ENCODE measurements at regions of chr17 and their contacts with region 1.

Region 1: GRCh38 chr17:7745748-7746470 is 28.4 kb downstream of the DNAH2 start:
- DNase-seq: peak in 1 of 6 donors; percentile 15
- ATAC-seq: no peak
- H3K4me3 ChIP-seq: no peak overlapping the region
- H3K27ac ChIP-seq: no peak overlapping the region
- H3K4me1 ChIP-seq: no peaks in the 10 kb centered on the region
- H3K27me3 ChIP-seq: no peaks in the 10 kb centered on the region
- CTCF ChIP-seq: no peak

Region 2: GRCh38 chr17:7650509-7651096 is 95.3 kb before region 1 on chr17 and contains the start of gene ATP1B2:
- intact Hi-C with region 1: no loop called
- DNase-seq: peak; percentile 57 to 86 (median 72)
- ATAC-seq: peak; percentile 78 to 92 (median 88)
- H3K4me3 ChIP-seq: peak within 1 kb of the TSS; percentile 18 to 50 (median 29)
- H3K27ac ChIP-seq: no peak within 1 kb of the TSS
- H3K4me1 ChIP-seq: peaks cover 4 to 10% (median 10%) of the 10 kb centered on the region in 3 donors
- H3K27me3 ChIP-seq: no peaks in the 10 kb centered on the region
- CTCF ChIP-seq: no peak
- total RNA-seq, gene ATP1B2: 0.79 to 1.9 (median 1.2) TPM

Region 3: GRCh38 chr17:7856883-7857723 is 111.2 kb after region 1 on chr17 and contains the start of gene NAA38:
- intact Hi-C with region 1: loop called in 2 of 3 experiments (anchors 5 to 10 kb)
- DNase-seq: peak; percentile 89 to 99 (median 96)
- ATAC-seq: peak; percentile 83 to 92 (median 86)
- H3K4me3 ChIP-seq: peak within 1 kb of the TSS; percentile 41 to 82 (median 59)
- H3K27ac ChIP-seq: peak within 1 kb of the TSS; percentile 75 to 80 (median 77)
- H3K4me1 ChIP-seq: peaks cover 0 to 17% (median 9%) of the 10 kb centered on the region in 3 donors
- H3K27me3 ChIP-seq: no peaks in the 10 kb centered on the region
- CTCF ChIP-seq: peak in 1 of 4 donors; percentile 15
- total RNA-seq, gene NAA38: 20.1 to 29.6 (median 26.6) TPM